ENCODE measurements at regions of chr1 and their contacts with region 1.

Region 1: DNA sequence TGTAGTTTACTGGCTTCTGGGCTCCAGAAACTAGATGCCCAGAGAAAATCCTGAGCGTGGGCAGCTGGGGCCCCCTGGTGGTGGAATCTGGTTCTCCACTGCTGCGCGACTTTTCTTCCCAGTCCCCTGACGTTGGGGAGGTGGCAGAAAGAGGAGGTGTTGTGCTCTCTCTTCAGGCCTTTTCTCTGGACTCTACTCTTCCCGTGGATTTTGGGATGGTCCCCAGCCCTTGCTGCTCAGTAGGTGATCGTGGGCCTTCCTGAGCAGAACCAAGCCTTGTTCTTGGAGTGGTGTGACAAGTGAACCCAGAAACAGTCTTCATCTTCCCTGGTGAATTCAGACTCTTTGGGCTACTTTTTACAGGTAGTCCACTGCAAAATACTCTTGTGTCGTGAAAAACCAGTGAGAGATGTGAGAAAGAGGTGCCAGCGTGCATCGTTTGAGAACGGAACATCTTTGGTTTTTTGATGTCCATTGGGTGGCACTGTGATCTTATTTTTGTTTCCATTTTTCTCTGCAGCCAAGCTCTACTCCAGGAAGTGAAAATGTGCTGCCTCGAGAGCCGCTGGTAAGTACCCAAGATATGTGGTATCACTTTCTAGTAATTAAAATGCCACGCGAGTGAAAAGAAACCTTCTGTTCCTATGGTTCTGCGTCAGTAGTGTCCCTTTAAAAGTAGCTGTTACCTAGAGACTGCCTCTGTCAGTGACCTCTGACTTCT is 20.2 kb downstream of the PEX14 start:
- DNase-seq: peak; percentile 73
- H3K4me3 Mint-ChIP-seq: peak overlapping the region; percentile 77
- H3K27ac Mint-ChIP-seq: peak overlapping the region; percentile 91
- H3K4me1 Mint-ChIP-seq: peaks cover 50% of the 10 kb centered on the region
- H3K27me3 Mint-ChIP-seq: no peaks in the 10 kb centered on the region

Region 2: GRCh38 chr1:10472220-10473144 is 22.4 kb before region 1 on chr1 and contains the start of gene DFFA:
- intact Hi-C with region 1: loop called (anchors 1 kb)
- DNase-seq: peak; percentile 90
- H3K4me3 Mint-ChIP-seq: peak within 1 kb of the TSS; percentile 95
- H3K27ac Mint-ChIP-seq: peak within 1 kb of the TSS; percentile 93
- H3K4me1 Mint-ChIP-seq: peaks cover 33% of the 10 kb centered on the region
- H3K27me3 Mint-ChIP-seq: no peaks in the 10 kb centered on the region
- total RNA-seq, gene DFFA: 52.9 and 53.8 TPM in 2 replicates

Region 3: GRCh38 chr1:10628685-10629084 is 133.8 kb after region 1 on chr1:
- intact Hi-C with region 1: no loop called
- DNase-seq: no peak
- H3K4me3 Mint-ChIP-seq: no peak overlapping the region
- H3K27ac Mint-ChIP-seq: no peak overlapping the region
- H3K4me1 Mint-ChIP-seq: no peaks in the 10 kb centered on the region
- H3K27me3 Mint-ChIP-seq: no peaks in the 10 kb centered on the region

Region 4: GRCh38 chr1:10867138-10867721 is 372.3 kb after region 1 on chr1:
- intact Hi-C with region 1: loop called (anchors 1 kb)
- DNase-seq: peak; percentile 50
- H3K4me3 Mint-ChIP-seq: peak overlapping the region; percentile 52
- H3K27ac Mint-ChIP-seq: no peak overlapping the region
- H3K4me1 Mint-ChIP-seq: peaks cover 15% of the 10 kb centered on the region
- H3K27me3 Mint-ChIP-seq: peaks cover 69% of the 10 kb centered on the region

Region 5: GRCh38 chr1:10941891-10942541 is 447.1 kb after region 1 on chr1:
- intact Hi-C with region 1: loop called (anchors 5 kb)
- DNase-seq: peak; percentile 40
- H3K4me3 Mint-ChIP-seq: no peak overlapping the region
- H3K27ac Mint-ChIP-seq: no peak overlapping the region
- H3K4me1 Mint-ChIP-seq: peaks cover 27% of the 10 kb centered on the region
- H3K27me3 Mint-ChIP-seq: peaks cover 62% of the 10 kb centered on the region

Region 6: DNA sequence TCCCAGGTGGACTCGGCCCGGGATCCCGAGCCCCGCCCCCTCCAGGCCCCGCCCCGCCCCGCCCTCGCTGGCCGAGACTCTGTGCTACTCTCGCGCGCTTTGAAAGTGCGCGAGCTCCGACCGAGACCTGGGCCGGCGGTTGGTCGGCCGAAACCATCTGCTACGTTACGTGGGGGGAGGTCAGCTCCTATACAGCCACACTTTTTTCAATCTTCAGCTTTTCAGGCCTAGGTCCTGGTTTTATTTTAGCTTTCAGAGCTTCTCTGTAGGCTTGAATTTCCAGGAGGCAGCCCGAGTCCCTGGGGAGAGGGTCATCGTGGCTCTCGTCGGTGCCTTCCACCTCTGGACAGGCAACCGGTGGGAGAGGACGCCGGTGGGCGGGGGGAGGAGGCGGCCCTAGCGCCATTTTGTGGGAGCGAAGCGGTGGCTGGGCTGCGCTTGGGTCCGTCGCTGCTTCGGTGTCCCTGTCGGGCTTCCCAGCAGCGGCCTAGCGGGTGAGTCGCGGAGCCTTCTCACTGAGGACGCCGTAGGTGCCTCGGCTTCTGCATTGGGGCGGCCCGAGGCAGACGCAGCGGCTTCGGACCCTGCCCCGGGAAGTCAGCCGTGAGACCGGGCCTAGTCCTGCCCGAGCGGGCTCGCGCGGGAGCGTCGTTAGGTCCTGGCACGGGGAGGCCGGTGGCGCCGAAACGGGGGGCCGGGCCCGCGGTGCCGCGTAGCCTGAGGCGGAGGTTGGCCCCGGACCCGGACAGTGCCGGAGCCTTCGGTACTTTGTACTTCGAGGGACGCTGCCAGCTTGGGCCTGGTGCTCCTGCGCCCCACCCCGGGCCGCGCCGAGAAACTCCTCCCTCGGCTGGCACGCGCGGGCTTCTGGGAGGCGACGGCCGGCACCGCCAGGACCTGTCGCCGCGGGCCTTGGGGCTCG is 517.6 kb after region 1 on chr1 and contains the start of gene TARDBP:
- intact Hi-C with region 1: loop called (anchors 5 kb)
- DNase-seq: peak; percentile 89
- H3K4me3 Mint-ChIP-seq: peak within 1 kb of the TSS; percentile 94
- H3K27ac Mint-ChIP-seq: peak within 1 kb of the TSS; percentile 98
- H3K4me1 Mint-ChIP-seq: peaks cover 19% of the 10 kb centered on the region
- H3K27me3 Mint-ChIP-seq: no peaks in the 10 kb centered on the region
- total RNA-seq, gene TARDBP: 190 and 202 TPM in 2 replicates